B cell (primary cell): ENCODE measurements at regions of chr6 and their contacts with region 1.

Region 1: GRCh38 chr6:90393232-90393884 is 96.7 kb upstream of the BACH2 start:
- DNase-seq: peak; percentile 89
- ATAC-seq: peak; percentile 68
- H3K4me3 ChIP-seq: peak overlapping the region in 1 of 5 experiments; percentile 9
- H3K4me3 Mint-ChIP-seq: peak overlapping the region; percentile 63
- H3K27ac ChIP-seq: peak overlapping the region; percentile 42 to 60
- H3K27ac Mint-ChIP-seq: peak overlapping the region; percentile 77
- H3K4me1 ChIP-seq: peaks cover 37 to 44% of the 10 kb centered on the region in 2 donors
- H3K4me1 Mint-ChIP-seq: peaks cover 49% of the 10 kb centered on the region
- H3K27me3 ChIP-seq: no peaks in the 10 kb centered on the region
- H3K27me3 Mint-ChIP-seq: no peaks in the 10 kb centered on the region
- CTCF ChIP-seq: peak; percentile 85

Region 2: DNA sequence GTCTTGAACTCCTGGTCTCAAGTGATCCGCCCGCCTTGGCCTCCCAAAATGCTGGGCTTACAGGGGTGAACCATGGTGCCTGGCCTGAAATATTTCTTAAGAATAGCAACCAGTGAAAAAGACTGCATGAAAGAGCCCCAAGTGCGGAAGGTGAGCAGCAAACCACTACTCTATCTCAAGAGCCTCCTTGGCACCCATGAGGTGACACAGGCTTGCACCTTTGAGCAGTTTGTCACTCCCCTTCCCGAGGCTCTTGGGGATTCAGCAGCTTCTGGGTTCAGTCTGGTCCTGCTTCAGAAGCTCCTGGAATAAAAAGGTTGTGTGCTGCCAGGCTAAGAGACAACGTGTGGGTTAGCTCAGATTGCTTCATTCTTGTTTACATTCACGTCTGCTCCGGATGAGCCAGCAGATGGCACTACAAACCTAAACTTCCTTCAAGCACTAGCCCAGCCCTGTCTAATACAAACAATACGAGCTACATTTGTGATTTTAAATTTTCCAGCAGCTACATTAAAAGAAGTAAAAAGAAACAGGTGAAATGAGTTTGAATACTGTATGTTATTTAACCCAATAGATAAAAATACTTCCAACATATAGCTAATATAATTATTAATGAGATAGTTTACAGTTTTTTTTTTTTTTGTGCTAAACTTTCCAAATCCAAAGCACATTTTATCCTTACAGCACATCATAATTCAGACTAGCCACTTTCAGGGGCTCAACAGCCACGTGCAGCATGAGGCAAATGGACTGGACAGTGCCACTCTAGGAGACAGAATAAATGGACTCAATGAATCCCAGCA is 452.9 kb before region 1 on chr6:
- CTCF ChIA-PET with region 1: interaction called, 28 read pairs
- POLR2A ChIA-PET with region 1: interaction called, 3 read pairs
- intact Hi-C with region 1: loop called (anchors 1 kb)
- DNase-seq: peak; percentile 68
- ATAC-seq: peak; percentile 81
- H3K4me3 ChIP-seq: no peak overlapping the region
- H3K4me3 Mint-ChIP-seq: no peak overlapping the region
- H3K27ac ChIP-seq: no peak overlapping the region
- H3K27ac Mint-ChIP-seq: peak overlapping the region; percentile 64
- H3K4me1 ChIP-seq: no peaks in the 10 kb centered on the region
- H3K4me1 Mint-ChIP-seq: peaks cover 7% of the 10 kb centered on the region
- H3K27me3 ChIP-seq: no peaks in the 10 kb centered on the region
- H3K27me3 Mint-ChIP-seq: no peaks in the 10 kb centered on the region
- CTCF ChIP-seq: peak; percentile 79

Region 3: DNA sequence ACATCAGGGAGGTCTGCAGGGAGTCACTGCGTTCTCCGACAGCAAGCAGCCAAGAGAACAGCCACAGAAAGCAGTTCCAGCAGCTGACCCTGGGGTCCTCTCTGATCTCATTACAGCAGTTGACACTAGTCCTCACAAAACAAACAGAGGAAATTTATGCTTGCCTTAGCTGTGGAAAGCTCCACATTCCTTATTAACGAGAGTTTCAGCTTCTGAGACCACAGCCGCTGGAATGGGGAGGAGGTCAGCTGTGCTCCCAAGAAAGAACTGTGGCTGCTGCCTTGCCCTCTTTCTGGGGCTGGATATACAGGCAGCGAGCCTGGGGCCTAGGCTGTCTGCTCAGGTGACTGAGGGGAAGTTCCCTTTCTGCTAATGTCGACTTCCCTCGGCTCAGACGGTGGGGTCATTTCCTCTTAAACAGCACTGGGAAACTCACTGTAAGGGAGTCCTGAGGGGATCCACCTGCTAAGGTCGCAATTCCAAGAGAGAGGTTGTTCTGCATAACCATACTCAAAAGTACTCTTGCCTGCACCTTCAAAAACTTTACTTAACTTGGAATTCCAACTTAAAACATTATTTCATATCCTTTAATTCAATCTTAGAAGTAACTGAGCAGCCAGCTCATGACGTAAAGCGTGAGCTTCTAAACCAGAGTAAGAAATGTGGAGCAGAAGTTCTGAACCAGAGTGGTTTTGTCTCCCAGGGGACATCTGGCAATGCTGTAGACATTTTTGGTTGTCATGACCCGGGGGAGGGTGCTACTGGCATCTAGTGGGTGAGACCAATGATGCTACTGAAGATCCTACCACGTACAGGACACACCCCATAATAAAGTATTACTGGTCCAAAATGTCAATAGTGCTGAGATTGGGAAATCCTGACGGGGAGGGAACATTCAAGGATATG is 177.0 kb before region 1 on chr6:
- CTCF ChIA-PET with region 1: interaction called, 26 read pairs
- POLR2A ChIA-PET with region 1: no interaction called
- intact Hi-C with region 1: no loop called
- DNase-seq: peak; percentile 95
- ATAC-seq: peak; percentile 84
- H3K4me3 ChIP-seq: no peak overlapping the region
- H3K4me3 Mint-ChIP-seq: peak overlapping the region; percentile 73
- H3K27ac ChIP-seq: peak overlapping the region; percentile 85 to 96
- H3K27ac Mint-ChIP-seq: no peak overlapping the region
- H3K4me1 ChIP-seq: peaks cover 83 to 84% of the 10 kb centered on the region in 2 donors
- H3K4me1 Mint-ChIP-seq: peaks cover 28% of the 10 kb centered on the region
- H3K27me3 ChIP-seq: no peaks in the 10 kb centered on the region
- H3K27me3 Mint-ChIP-seq: no peaks in the 10 kb centered on the region
- CTCF ChIP-seq: peak; percentile 63

Region 4: DNA sequence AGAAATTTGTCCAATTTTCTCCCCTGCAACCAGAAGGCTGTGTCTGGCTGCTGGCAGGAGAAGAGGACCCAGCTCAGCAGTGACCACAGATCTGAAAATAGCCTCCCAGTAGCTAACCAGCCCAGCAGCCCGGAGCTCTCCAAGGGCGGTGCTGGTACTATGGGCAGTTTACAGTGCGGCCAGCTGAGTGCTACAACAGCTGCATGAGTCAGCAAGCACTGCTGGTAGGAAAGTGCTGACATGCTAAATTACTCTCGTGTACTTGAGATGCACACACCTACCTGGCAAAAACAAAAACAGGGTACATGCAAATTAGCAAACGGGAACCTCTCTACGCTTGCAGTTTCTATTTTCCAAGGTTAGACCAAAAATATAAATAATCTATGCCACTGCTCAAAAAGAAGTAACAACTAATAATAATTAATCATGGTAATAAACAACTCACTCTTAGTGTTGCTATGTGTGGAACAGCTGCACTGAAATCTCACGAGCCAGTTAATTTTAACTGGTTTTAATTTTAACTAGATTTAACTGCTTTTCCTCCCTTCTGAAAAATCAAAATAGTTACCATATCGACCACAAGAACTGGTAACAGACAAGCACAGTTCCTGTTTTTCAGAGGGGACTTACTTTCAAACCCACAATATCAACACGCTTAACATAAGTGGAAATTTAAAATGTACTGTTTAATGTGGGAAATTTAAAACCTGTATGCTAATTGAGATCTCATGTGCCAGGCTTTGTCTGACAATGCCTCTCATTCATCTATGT is 107.6 kb before region 1 on chr6:
- CTCF ChIA-PET with region 1: interaction called, 83 read pairs
- POLR2A ChIA-PET with region 1: interaction called, 5 read pairs
- intact Hi-C with region 1: loop called (anchors 1 kb)
- DNase-seq: peak; percentile 87
- ATAC-seq: peak; percentile 70
- H3K4me3 ChIP-seq: peak overlapping the region; percentile 8 to 58 (median 32)
- H3K4me3 Mint-ChIP-seq: peak overlapping the region; percentile 73
- H3K27ac ChIP-seq: peak overlapping the region; percentile 80 to 90
- H3K27ac Mint-ChIP-seq: peak overlapping the region; percentile 85
- H3K4me1 ChIP-seq: peaks cover 78 to 90% of the 10 kb centered on the region in 2 donors
- H3K4me1 Mint-ChIP-seq: peaks cover 88% of the 10 kb centered on the region
- H3K27me3 ChIP-seq: no peaks in the 10 kb centered on the region
- H3K27me3 Mint-ChIP-seq: no peaks in the 10 kb centered on the region
- CTCF ChIP-seq: no peak

Region 5: DNA sequence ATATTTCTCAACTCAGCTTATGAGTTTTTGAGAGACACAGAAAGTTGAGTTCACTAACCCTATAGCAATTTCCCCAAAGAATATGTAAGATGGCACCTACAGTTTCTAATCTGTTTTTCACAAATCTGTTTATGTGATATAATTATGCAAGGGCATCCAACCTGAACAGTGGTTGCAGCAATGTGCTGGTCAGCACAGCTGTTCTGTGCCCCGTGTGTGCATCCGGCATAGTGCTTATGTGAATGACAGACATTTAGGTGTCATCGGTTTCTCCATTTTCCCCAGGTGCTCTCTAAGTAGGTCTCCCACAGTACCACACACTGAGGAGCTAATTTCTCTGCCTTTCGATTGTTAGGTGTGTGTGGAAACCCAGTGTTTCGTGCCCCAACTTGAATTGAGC is 89.0 kb before region 1 on chr6:
- CTCF ChIA-PET with region 1: interaction called, 16 read pairs
- POLR2A ChIA-PET with region 1: no interaction called
- intact Hi-C with region 1: no loop called
- DNase-seq: peak; percentile 75
- ATAC-seq: peak; percentile 90
- H3K4me3 ChIP-seq: peak overlapping the region in 1 of 5 experiments; percentile 26
- H3K4me3 Mint-ChIP-seq: peak overlapping the region; percentile 24
- H3K27ac ChIP-seq: peak overlapping the region; percentile 82 to 83
- H3K27ac Mint-ChIP-seq: peak overlapping the region; percentile 89
- H3K4me1 ChIP-seq: peaks cover 53 to 58% of the 10 kb centered on the region in 2 donors
- H3K4me1 Mint-ChIP-seq: peaks cover 52% of the 10 kb centered on the region
- H3K27me3 ChIP-seq: no peaks in the 10 kb centered on the region
- H3K27me3 Mint-ChIP-seq: no peaks in the 10 kb centered on the region
- CTCF ChIP-seq: no peak

Region 6: GRCh38 chr6:90375681-90376439 is 17.5 kb before region 1 on chr6:
- CTCF ChIA-PET with region 1: interaction called, 29 read pairs
- POLR2A ChIA-PET with region 1: interaction called, 4 read pairs
- intact Hi-C with region 1: loop called (anchors 1 kb)
- DNase-seq: peak; percentile 95
- ATAC-seq: peak; percentile 95
- H3K4me3 ChIP-seq: peak overlapping the region in 4 of 5 experiments; percentile 16 to 48 (median 29)
- H3K4me3 Mint-ChIP-seq: peak overlapping the region; percentile 79
- H3K27ac ChIP-seq: peak overlapping the region; percentile 94 to 98
- H3K27ac Mint-ChIP-seq: peak overlapping the region; percentile 96
- H3K4me1 ChIP-seq: peaks cover 39 to 45% of the 10 kb centered on the region in 2 donors
- H3K4me1 Mint-ChIP-seq: peaks cover 64% of the 10 kb centered on the region
- H3K27me3 ChIP-seq: no peaks in the 10 kb centered on the region
- H3K27me3 Mint-ChIP-seq: no peaks in the 10 kb centered on the region
- CTCF ChIP-seq: no peak

Region 7: GRCh38 chr6:90403489-90404381 is 10.4 kb after region 1 on chr6:
- CTCF ChIA-PET with region 1: interaction called, 11 read pairs
- POLR2A ChIA-PET with region 1: no interaction called
- intact Hi-C with region 1: no loop called
- DNase-seq: no peak
- ATAC-seq: no peak
- H3K4me3 ChIP-seq: no peak overlapping the region
- H3K4me3 Mint-ChIP-seq: no peak overlapping the region
- H3K27ac ChIP-seq: no peak overlapping the region
- H3K27ac Mint-ChIP-seq: peak overlapping the region; percentile 39
- H3K4me1 ChIP-seq: peaks cover 10 to 19% of the 10 kb centered on the region in 2 donors
- H3K4me1 Mint-ChIP-seq: peaks cover 19% of the 10 kb centered on the region
- H3K27me3 ChIP-seq: no peaks in the 10 kb centered on the region
- H3K27me3 Mint-ChIP-seq: no peaks in the 10 kb centered on the region
- CTCF ChIP-seq: no peak